ENCODE measurements at regions of chr19 and their contacts with region 1.

Region 1: GRCh38 chr19:53792721-53793433 is 31.2 kb downstream of the NLRP12 start:
- DNase-seq: peak; percentile 88
- ATAC-seq: peak; percentile 100
- H3K4me3 Mint-ChIP-seq: no peak overlapping the region
- H3K27ac Mint-ChIP-seq: no peak overlapping the region
- H3K4me1 Mint-ChIP-seq: no peaks in the 10 kb centered on the region
- H3K27me3 Mint-ChIP-seq: peaks cover 2% of the 10 kb centered on the region

Region 2: DNA sequence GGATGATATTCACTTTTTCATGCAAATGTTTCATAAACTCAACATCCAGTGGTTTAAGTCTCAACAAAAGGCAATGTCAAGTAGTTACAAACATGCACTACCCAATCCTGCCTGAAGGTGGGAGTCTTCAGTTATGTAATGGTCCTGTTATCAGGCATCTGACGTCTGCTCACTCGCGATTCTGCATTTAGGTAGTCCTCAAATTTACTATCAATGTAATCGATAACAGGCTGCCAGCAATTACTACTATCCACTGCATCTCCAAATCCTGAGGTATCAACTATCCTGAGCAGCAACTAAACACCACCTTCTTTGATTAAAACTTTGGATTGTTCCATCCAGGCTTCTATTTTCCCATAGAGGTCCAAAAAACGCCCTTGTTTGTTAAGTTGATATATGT is 19.9 kb before region 1 on chr19:
- CTCF ChIA-PET with region 1: interaction called, 13 read pairs
- POLR2A ChIA-PET with region 1: no interaction called
- intact Hi-C with region 1: no loop called
- DNase-seq: peak; percentile 72
- ATAC-seq: no peak
- H3K4me3 Mint-ChIP-seq: no peak overlapping the region
- H3K27ac Mint-ChIP-seq: no peak overlapping the region
- H3K4me1 Mint-ChIP-seq: no peaks in the 10 kb centered on the region
- H3K27me3 Mint-ChIP-seq: peaks cover 2% of the 10 kb centered on the region

Region 3: GRCh38 chr19:53809518-53810186 is 16.8 kb after region 1 on chr19:
- CTCF ChIA-PET with region 1: interaction called, 10 read pairs
- POLR2A ChIA-PET with region 1: no interaction called
- intact Hi-C with region 1: no loop called
- DNase-seq: peak; percentile 29
- ATAC-seq: no peak
- H3K4me3 Mint-ChIP-seq: no peak overlapping the region
- H3K27ac Mint-ChIP-seq: no peak overlapping the region
- H3K4me1 Mint-ChIP-seq: no peaks in the 10 kb centered on the region
- H3K27me3 Mint-ChIP-seq: no peaks in the 10 kb centered on the region

Region 4: DNA sequence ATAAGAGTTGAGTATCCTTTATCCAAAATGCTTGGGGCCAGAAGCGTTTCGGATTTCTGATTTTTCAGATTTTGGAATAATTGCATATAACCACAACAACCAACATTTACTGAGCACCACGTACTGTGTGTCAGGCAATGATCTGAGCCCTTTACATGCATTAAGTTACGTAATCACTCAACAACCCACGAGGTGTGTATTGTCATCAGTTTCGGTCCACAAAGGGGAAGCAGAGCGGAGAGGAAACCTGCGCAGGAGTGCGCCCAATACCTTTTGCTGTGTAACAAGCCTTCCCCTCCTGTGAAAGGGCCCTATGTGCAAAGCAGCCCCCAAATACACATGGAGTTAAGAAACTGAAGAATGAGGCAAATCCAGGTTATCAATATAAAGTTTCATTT is 52.0 kb after region 1 on chr19:
- CTCF ChIA-PET with region 1: interaction called, 3 read pairs
- POLR2A ChIA-PET with region 1: no interaction called
- intact Hi-C with region 1: loop called in 1 of 2 experiments (anchors 1 kb)
- DNase-seq: no peak
- ATAC-seq: no peak
- H3K4me3 Mint-ChIP-seq: no peak overlapping the region
- H3K27ac Mint-ChIP-seq: no peak overlapping the region
- H3K4me1 Mint-ChIP-seq: peaks cover 5% of the 10 kb centered on the region
- H3K27me3 Mint-ChIP-seq: peaks cover 17% of the 10 kb centered on the region

Region 5: DNA sequence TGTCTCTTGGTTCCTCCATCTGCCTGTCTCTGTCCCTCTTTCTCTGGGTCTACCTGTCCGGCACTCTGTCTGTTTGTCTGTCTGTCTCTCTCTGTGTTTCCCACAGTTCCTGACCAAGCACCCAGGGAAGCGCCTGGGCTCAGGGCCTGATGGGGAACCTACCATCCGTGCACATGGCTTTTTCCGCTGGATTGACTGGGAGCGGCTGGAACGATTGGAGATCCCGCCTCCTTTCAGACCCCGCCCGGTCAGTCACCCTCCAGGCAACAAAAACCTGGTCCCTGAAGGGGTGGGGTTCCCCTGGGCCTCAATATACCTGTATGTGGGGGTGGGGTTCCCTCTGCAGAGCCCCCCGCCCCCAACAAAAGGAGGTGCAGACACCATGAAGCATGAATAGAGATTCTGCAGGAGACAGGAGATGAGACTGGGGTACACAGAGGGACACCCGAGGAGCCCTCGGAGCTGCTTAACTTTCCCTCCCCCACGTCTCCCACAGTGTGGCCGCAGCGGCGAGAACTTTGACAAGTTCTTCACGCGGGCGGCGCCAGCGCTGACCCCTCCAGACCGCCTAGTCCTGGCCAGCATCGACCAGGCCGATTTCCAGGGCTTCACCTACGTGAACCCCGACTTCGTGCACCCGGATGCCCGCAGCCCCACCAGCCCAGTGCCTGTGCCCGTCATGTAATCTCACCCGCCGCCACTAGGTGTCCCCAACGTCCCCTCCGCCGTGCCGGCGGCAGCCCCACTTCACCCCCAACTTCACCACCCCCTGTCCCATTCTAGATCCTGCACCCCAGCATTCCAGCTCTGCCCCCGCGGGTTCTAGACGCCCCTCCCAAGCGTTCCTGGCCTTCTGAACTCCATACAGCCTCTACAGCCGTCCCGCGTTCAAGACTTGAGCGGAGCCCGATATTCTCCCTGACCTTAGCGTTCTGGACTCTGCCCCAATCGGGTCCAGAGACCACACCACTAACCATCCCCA is 113.6 kb after region 1 on chr19:
- CTCF ChIA-PET with region 1: no interaction called
- POLR2A ChIA-PET with region 1: no interaction called
- intact Hi-C with region 1: no loop called
- DNase-seq: peak; percentile 82
- ATAC-seq: peak; percentile 52
- H3K4me3 Mint-ChIP-seq: no peak overlapping the region
- H3K27ac Mint-ChIP-seq: no peak overlapping the region
- H3K4me1 Mint-ChIP-seq: peaks cover 19% of the 10 kb centered on the region
- H3K27me3 Mint-ChIP-seq: peaks cover 69% of the 10 kb centered on the region

Region 6: DNA sequence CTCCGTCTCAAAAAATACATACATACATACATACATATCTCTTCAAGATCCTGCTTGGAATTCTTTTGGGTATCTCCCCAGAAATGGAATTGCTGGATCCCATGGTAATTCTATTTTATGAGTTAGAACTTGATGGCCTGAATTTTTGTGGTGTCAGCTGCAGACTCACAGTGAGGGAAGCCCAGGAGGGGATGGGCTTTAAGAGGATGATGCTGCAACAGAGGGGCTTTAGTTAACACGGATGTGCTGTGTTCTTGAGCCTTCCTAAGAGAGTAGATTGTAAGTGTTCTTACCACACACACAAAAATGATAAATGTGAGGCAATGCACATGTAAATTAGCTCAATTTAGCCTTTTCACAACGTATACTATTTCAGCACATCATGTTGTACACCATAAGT is 230.3 kb after region 1 on chr19:
- CTCF ChIA-PET with region 1: interaction called, 36 read pairs
- POLR2A ChIA-PET with region 1: interaction called, 3 read pairs
- intact Hi-C with region 1: loop called in 1 of 2 experiments (anchors 5 kb)
- DNase-seq: no peak
- ATAC-seq: no peak
- H3K4me3 Mint-ChIP-seq: no peak overlapping the region
- H3K27ac Mint-ChIP-seq: no peak overlapping the region
- H3K4me1 Mint-ChIP-seq: peaks cover 4% of the 10 kb centered on the region
- H3K27me3 Mint-ChIP-seq: peaks cover 29% of the 10 kb centered on the region

Region 7: DNA sequence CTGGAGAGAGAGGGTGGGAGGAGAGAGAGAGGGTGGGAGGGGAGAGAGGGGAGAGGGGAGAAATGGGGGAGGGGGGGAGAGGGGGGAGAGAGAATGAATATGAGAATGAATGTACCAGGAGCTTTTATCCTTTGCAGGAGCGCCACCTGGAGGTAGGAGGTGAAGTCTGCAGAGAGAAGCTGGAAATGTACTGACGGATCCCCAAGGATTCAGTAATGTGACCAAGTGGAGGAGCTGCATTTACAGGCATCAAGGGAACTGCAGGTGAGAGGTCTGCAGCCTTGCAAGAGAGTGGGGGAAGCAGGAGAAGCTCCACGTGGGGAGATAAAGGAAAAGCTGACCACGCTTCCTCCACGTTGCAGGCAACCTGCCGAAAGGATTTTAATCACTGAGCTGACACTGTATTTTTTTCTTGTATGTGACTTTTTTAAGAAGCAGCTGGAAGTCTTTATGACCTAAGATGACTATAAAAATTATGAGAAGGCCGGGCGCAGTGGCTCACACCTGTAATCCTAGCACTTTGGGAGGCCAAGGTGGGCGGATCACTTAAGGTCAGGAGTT is 237.1 kb after region 1 on chr19:
- CTCF ChIA-PET with region 1: interaction called, 36 read pairs
- POLR2A ChIA-PET with region 1: interaction called, 3 read pairs
- intact Hi-C with region 1: loop called in 1 of 2 experiments (anchors 1 kb)
- DNase-seq: peak; percentile 75
- ATAC-seq: no peak
- H3K4me3 Mint-ChIP-seq: no peak overlapping the region
- H3K27ac Mint-ChIP-seq: no peak overlapping the region
- H3K4me1 Mint-ChIP-seq: no peaks in the 10 kb centered on the region
- H3K27me3 Mint-ChIP-seq: peaks cover 24% of the 10 kb centered on the region

Measured in activated CD4-positive, alpha-beta T cell treated with anti-CD3 and anti-CD28 coated beads for 36 hours (primary cell).